Left ventricle myocardium superior (tissue), 1 donor: ENCODE measurements at regions of chr1 and their contacts with region 1.

Region 1: DNA sequence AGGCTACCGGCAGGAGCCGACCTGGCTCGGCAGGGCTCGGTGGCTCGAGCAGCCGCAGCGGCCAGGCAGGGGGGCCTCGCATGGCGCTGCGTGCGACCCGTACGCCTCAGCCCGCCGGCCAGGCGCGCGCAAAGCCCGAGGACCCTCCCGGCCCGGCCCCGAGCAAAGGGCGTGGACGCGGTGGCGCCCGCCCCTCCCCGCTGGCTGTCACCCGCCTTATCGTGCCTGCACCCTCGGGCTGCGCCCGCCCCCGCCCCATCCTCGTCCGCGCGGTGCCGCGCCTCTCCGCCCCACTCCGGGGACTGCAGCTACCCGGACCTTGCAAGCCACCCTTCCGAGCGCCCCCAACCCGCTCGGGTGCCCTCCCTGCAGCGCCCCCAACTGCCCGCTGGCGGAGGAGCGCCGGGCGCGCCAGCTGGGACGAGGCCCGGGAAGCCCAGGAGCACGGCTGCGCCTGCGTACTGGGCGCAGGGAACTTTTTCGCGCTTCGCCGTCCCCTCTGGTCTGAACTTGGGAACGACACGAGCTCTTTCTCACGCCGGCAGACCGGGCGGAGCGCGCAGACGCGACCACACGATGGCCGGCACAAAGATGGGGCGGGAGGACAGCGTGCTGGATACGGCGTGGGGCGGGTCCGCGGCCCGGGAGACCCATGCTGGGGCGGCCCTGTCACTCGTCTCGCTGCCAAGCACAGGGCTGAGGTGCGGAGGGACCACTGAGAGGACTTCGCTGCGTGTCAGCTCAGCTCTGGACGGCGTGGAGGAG is at the start of gene ABCB10:
- DNase-seq: peak; percentile 98
- ATAC-seq: peak; percentile 93
- total RNA-seq, gene ABCB10: 11.0 TPM

Region 2: DNA sequence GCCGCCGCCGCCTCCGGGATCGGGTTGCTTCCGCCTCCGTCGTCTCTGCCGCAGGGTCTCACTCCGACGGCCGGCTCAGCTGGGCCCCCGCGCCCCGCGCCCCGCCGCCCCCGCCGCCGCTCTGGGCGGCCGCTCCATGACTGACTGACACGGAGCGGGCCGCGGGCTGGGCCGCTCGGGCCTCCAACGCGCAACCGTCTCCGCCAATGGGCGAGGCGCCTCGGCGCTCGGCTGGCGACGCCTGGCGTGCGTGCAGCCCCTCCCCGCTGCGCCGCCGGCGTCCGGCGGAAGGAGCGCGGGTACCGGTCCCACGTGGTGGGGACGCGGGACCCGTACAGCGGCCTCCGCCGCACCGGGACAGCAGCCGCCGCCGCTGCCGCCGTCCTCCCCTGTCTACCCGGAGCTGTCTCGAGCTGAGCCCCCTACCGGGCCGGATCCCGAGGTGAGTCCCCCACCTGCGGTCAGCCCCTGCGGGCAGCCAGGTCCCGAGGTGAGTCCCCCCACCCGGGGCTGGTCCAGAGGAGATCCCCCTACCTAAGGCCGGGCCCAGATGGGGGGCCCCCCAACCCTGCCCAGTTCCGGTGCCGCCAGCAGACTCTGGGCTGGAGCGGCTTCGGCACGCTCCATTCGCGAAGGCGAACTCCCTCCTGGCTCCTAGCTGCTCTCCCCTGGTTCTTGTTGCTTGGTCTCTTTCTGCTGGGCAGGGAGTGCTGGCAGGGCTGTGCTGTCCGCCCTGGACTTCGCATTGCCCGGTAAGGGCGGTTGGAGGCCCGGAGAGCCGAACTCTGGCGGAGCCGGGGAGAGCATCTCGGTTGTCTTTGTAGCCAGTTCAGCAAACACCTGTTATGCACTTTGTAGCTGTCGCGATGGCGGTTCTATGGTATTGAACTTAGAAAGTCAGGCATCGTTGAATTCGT is 67.4 kb after region 1 on chr1 and contains the starts of genes TAF5L and URB2:
- intact Hi-C with region 1: loop called (anchors 10 kb)
- DNase-seq: peak; percentile 94
- ATAC-seq: peak; percentile 98
- total RNA-seq, gene TAF5L: 10.0 TPM
- total RNA-seq, gene URB2: 2.9 TPM